Mammary epithelial cell (primary cell): ENCODE measurements at regions of chr20 and their contacts with region 1.

Region 1: GRCh38 chr20:38187512-38187911 is 22.4 kb upstream of the TGM2 start:
- DNase-seq: no peak
- H3K4me3 ChIP-seq: no peak overlapping the region
- H3K27ac ChIP-seq: peak overlapping the region; percentile 27
- H3K4me1 ChIP-seq: peaks cover 19% of the 10 kb centered on the region
- H3K27me3 ChIP-seq: no peaks in the 10 kb centered on the region
- CTCF ChIP-seq: peak; percentile 12 to 13

Region 2: DNA sequence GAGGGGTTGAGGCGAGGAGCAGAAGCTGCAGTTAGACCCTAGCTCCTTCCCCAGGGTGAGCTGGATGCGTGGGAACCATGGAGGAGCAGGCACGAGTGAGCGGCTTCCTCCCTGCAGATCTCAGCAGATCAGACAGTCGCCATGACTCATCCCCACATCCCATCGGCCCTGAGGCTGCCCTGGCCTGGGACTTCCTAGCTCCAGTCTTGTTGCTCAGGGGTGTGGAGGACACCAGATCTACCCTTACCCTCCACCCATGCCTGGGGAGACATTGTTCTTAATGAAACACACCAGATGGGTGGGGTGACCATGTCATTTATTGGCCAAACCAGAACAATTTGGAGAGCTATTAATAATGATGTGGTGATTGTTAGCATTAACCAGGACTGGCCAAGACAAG is 13.8 kb after region 1 on chr20:
- CTCF ChIA-PET with region 1: interaction called, 3 read pairs
- dilution Hi-C with region 1: no loop called
- in situ Hi-C with region 1: no loop called
- intact Hi-C with region 1: loop called (anchors 1 kb)
- DNase-seq: peak; percentile 94
- H3K4me3 ChIP-seq: no peak overlapping the region
- H3K27ac ChIP-seq: peak overlapping the region; percentile 26
- H3K4me1 ChIP-seq: peaks cover 43% of the 10 kb centered on the region
- H3K27me3 ChIP-seq: no peaks in the 10 kb centered on the region
- CTCF ChIP-seq: no peak

Region 3: DNA sequence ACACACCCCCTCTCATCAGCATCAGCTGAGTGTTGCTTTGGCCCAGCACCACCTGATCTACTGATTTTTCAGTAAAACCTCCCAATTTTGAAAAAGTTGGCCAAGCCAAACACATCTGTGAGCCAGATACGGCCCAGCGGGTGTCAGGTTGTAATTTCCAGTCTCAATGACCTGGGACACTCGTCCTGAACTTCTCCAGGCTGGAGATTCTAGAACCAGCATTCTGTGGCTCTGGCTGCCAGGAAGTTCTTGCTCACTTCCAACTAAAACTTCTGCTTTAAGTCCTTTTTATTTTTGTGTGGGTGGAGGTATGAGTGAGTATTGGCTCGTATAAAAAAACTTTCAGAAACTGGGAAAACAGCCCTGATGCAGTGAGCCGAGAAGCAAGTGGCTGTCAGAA is 67.9 kb after region 1 on chr20:
- CTCF ChIA-PET with region 1: no interaction called
- dilution Hi-C with region 1: no loop called
- in situ Hi-C with region 1: no loop called
- intact Hi-C with region 1: no loop called
- DNase-seq: no peak
- H3K4me3 ChIP-seq: no peak overlapping the region
- H3K27ac ChIP-seq: no peak overlapping the region
- H3K4me1 ChIP-seq: peaks cover 4% of the 10 kb centered on the region
- H3K27me3 ChIP-seq: peaks cover 2% of the 10 kb centered on the region
- CTCF ChIP-seq: no peak

Region 4: GRCh38 chr20:38460040-38460623 is 272.6 kb after region 1 on chr20:
- CTCF ChIA-PET with region 1: no interaction called
- dilution Hi-C with region 1: no loop called
- in situ Hi-C with region 1: no loop called
- intact Hi-C with region 1: no loop called
- DNase-seq: peak; percentile 88
- H3K4me3 ChIP-seq: no peak overlapping the region
- H3K27ac ChIP-seq: peak overlapping the region; percentile 41
- H3K4me1 ChIP-seq: peaks cover 9% of the 10 kb centered on the region
- H3K27me3 ChIP-seq: no peaks in the 10 kb centered on the region
- CTCF ChIP-seq: no peak